PC-9 (cell line): ENCODE measurements at regions of chr6 and their contacts with region 1.

Region 1: GRCh38 chr6:7086488-7086887 is 21.3 kb upstream of the RREB1 start:
- DNase-seq: peak in 1 of 2 experiments; percentile 5
- H3K4me3 ChIP-seq: no peak overlapping the region
- H3K27ac ChIP-seq: no peak overlapping the region
- H3K4me1 ChIP-seq: no peaks in the 10 kb centered on the region
- H3K27me3 ChIP-seq: no peaks in the 10 kb centered on the region
- CTCF ChIP-seq: no peak

Region 2: GRCh38 chr6:7021301-7021700 is 65.2 kb before region 1 on chr6:
- CTCF ChIA-PET with region 1: no interaction called
- POLR2A ChIA-PET with region 1: interaction called, 17 read pairs
- intact Hi-C with region 1: no loop called
- DNase-seq: no peak
- H3K4me3 ChIP-seq: no peak overlapping the region
- H3K27ac ChIP-seq: no peak overlapping the region
- H3K4me1 ChIP-seq: no peaks in the 10 kb centered on the region
- H3K27me3 ChIP-seq: no peaks in the 10 kb centered on the region
- CTCF ChIP-seq: no peak